CD4-positive, alpha-beta T cell (primary cell): ENCODE measurements at regions of chr6 and their contacts with region 1.

Region 1: DNA sequence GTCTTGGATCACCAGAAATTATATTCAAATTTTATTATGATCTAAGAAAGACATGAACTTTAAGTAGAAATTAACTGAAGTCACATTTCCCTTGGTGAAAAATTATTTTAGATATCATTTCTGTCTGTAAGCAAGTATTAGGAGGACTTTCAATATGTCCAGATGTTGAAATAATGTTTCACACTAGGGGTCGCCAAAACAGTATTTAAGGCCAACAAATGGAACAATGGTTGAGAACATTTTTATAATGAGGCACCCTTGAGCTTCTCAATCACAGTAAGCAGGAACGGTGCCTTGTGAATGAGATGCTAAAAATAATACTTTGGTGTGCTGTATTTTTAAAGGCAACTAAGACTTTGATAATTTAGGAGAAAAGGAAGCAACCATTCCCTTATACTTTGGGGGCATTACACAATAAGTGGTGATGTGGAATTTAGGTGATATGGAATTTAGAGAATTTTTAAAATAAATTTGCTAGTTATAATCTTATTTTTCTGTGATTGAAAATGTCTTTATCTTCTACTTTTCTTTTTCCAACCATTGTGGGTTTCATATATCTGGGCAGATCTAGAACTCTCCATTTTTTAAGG is 9.6 kb upstream of the SF3B5 start:
- DNase-seq: peak in 5 of 14 experiments; percentile 20 to 83 (median 82)
- ATAC-seq: peak; percentile 82
- H3K4me3 ChIP-seq: no peak overlapping the region
- H3K4me3 Mint-ChIP-seq: no peak overlapping the region
- H3K27ac ChIP-seq: no peak overlapping the region
- H3K27ac Mint-ChIP-seq: no peak overlapping the region
- H3K4me1 ChIP-seq: no peaks in the 10 kb centered on the region
- H3K4me1 Mint-ChIP-seq: peaks cover 4% of the 10 kb centered on the region
- H3K27me3 ChIP-seq: no peaks in the 10 kb centered on the region
- H3K27me3 Mint-ChIP-seq: no peaks in the 10 kb centered on the region
- CTCF ChIP-seq: peak; percentile 79

Region 2: GRCh38 chr6:144006736-144007477 is 98.1 kb before region 1 on chr6:
- CTCF ChIA-PET with region 1: no interaction called
- POLR2A ChIA-PET with region 1: no interaction called
- intact Hi-C with region 1: no loop called
- DNase-seq: peak in 2 of 14 experiments; percentile 7 to 15
- ATAC-seq: no peak
- H3K4me3 ChIP-seq: no peak overlapping the region
- H3K4me3 Mint-ChIP-seq: peak overlapping the region; percentile 78
- H3K27ac ChIP-seq: no peak overlapping the region
- H3K27ac Mint-ChIP-seq: no peak overlapping the region
- H3K4me1 ChIP-seq: peaks cover 10% of the 10 kb centered on the region
- H3K4me1 Mint-ChIP-seq: peaks cover 10% of the 10 kb centered on the region
- H3K27me3 ChIP-seq: peaks cover 4 to 6% of the 10 kb centered on the region in 2 experiments
- H3K27me3 Mint-ChIP-seq: peaks cover 44% of the 10 kb centered on the region
- CTCF ChIP-seq: no peak

Region 3: DNA sequence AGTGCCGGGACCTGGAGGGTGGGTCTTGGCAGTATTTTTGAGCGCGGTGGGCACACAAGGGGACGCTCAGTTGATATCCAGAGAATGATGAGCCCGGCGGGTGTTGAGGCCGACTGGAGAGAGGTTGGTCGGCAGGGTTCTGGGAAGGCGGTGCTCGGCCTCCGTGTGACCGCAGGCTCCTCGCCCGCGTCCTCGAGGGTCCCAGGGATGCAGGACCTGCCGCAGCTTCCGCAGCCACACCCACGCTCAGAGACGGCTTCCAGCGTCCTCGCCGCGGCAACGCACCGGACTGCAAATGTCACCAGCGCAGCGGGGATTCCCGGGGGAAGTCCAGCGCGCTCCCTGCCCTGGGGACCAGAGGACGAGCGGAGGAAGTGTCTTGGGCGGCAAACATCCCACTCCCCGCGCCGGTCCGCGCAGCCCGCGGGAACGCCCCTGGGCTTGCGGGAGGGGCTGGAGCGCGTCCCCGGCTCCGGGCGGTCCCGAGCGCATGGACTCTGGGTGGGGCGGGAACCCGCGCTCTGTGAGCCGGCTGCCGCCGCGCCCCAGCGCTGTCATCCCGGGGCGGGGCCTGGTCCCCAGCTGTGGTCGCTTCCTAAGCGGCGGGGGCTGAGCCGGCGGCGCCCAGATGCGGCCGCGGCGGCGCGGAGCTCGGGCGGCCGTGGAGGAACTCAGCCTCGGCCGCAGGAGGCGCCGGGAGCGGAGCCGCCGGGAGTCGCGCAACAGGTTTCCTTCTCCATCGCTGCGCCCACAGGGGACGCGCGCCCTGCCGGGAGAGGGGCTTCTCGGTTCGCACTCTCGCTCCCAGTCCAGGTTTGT is 45.1 kb after region 1 on chr6 and contains the start of gene STX11:
- CTCF ChIA-PET with region 1: no interaction called
- POLR2A ChIA-PET with region 1: no interaction called
- intact Hi-C with region 1: loop called (anchors 5 kb)
- DNase-seq: peak; percentile 46 to 92 (median 63)
- ATAC-seq: peak; percentile 67
- H3K4me3 ChIP-seq: peak within 1 kb of the TSS; percentile 78
- H3K4me3 Mint-ChIP-seq: peak within 1 kb of the TSS; percentile 92
- H3K27ac ChIP-seq: peak within 1 kb of the TSS; percentile 54 to 74
- H3K27ac Mint-ChIP-seq: peak within 1 kb of the TSS; percentile 83
- H3K4me1 ChIP-seq: peaks cover 20% of the 10 kb centered on the region
- H3K4me1 Mint-ChIP-seq: peaks cover 31% of the 10 kb centered on the region
- H3K27me3 ChIP-seq: no peaks in the 10 kb centered on the region
- H3K27me3 Mint-ChIP-seq: no peaks in the 10 kb centered on the region
- CTCF ChIP-seq: no peak
- total RNA-seq, gene STX11: 16.1 to 16.8 TPM

Region 4: DNA sequence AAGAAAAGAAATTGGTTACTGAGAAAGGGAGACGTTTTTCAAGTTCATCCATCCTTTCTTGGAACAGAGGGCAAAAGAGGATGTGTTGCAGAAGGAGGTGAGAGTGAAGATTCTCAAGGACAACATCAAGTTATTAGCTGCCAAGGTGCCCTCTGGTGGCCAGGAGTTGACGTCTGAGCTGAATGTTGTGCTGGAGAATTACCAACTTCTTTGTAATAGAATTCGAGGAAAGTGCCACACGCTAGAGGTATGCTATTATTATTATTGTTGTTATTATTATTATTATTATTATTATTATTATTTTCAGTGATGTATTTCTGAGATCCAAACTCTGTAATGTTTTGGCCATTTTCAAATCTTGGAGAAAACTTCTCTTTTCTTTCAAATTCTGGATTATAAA is 377.1 kb after region 1 on chr6:
- CTCF ChIA-PET with region 1: interaction called, 5 read pairs
- POLR2A ChIA-PET with region 1: interaction called, 3 read pairs
- intact Hi-C with region 1: loop called (anchors 1 kb)
- DNase-seq: peak; percentile 55 to 81 (median 68)
- ATAC-seq: peak; percentile 77
- H3K4me3 ChIP-seq: no peak overlapping the region
- H3K4me3 Mint-ChIP-seq: no peak overlapping the region
- H3K27ac ChIP-seq: no peak overlapping the region
- H3K27ac Mint-ChIP-seq: peak overlapping the region; percentile 31
- H3K4me1 ChIP-seq: no peaks in the 10 kb centered on the region
- H3K4me1 Mint-ChIP-seq: no peaks in the 10 kb centered on the region
- H3K27me3 ChIP-seq: no peaks in the 10 kb centered on the region
- H3K27me3 Mint-ChIP-seq: no peaks in the 10 kb centered on the region
- CTCF ChIP-seq: peak; percentile 82

Region 5: GRCh38 chr6:145214570-145214969 is 1109.6 kb after region 1 on chr6:
- CTCF ChIA-PET with region 1: no interaction called
- POLR2A ChIA-PET with region 1: no interaction called
- intact Hi-C with region 1: loop called in 1 of 2 experiments (anchors 5 kb)
- DNase-seq: peak in 3 of 14 experiments; percentile 23 to 35 (median 27)
- ATAC-seq: no peak
- H3K4me3 ChIP-seq: no peak overlapping the region
- H3K4me3 Mint-ChIP-seq: no peak overlapping the region
- H3K27ac ChIP-seq: no peak overlapping the region
- H3K27ac Mint-ChIP-seq: no peak overlapping the region
- H3K4me1 ChIP-seq: peaks cover 3% of the 10 kb centered on the region
- H3K4me1 Mint-ChIP-seq: peaks cover 8% of the 10 kb centered on the region
- H3K27me3 ChIP-seq: no peaks in the 10 kb centered on the region
- H3K27me3 Mint-ChIP-seq: peaks cover 10% of the 10 kb centered on the region
- CTCF ChIP-seq: peak; percentile 49

Region 6: DNA sequence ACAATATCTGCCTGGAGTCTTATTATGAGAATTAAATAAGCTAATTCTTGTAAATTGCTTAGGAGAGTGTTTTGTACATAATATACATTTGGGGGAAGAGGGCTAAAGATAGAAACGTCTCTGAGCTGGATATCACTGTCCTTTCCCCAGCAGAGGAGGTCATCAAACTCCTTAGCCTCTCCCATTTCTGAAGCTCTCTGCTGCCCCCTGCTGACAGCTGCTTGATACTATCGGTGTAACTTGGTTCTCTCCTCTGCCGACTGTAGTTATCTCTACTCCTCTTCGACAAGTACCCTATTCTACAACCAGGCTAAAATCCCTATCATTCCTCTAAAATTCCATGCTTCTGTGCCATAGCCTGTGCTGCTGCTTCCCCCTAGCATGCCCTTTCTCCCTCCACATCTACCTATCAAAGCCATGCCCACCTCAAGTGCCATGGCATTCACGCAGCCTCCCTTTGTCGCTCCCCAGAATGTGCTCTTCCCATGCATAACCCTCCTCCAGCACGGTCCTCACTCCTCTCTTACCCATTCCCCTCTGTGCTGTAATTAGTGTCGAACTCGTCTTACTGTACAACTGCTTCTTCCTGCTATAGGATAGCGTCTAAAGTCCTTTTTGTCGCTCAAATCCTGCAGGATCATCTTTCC is 1529.1 kb after region 1 on chr6:
- CTCF ChIA-PET with region 1: no interaction called
- POLR2A ChIA-PET with region 1: no interaction called
- intact Hi-C with region 1: loop called in 1 of 2 experiments (anchors 10 kb)
- DNase-seq: peak; percentile 56 to 84 (median 72)
- ATAC-seq: no peak
- H3K4me3 ChIP-seq: no peak overlapping the region
- H3K4me3 Mint-ChIP-seq: no peak overlapping the region
- H3K27ac ChIP-seq: no peak overlapping the region
- H3K27ac Mint-ChIP-seq: no peak overlapping the region
- H3K4me1 ChIP-seq: peaks cover 3% of the 10 kb centered on the region
- H3K4me1 Mint-ChIP-seq: peaks cover 5% of the 10 kb centered on the region
- H3K27me3 ChIP-seq: no peaks in the 10 kb centered on the region
- H3K27me3 Mint-ChIP-seq: no peaks in the 10 kb centered on the region
- CTCF ChIP-seq: peak; percentile 76